ENCODE measurements at regions of chr7 and their contacts with region 1.

Region 1: DNA sequence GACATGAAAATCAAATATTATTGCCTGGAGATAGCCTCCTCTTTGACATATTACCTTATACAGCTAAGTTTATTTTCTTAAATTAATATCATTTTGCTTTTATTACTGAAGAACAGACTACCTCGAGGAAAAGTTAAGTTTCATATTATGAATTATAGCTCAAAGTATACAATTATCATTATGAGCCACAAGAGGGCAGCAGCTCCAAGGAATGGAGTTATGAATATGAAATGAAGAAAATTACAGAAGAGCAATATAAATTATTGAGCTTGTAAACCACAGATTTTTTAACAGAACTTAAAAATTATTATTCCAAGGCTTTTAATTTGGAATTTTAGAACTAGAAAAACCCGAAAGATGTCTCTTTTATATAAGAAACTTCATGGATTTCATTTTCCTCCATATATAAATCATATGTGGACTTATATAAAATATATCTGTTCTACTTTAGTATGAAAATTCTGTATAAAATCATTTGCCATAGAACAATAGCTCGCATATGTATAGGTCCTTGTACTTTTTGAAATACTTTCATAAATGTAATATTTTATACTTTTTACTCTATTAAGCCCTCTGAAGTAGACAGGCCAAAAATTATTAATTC is 40.1 kb downstream of the IQUB start:
- DNase-seq: peak; percentile 67
- H3K4me3 Mint-ChIP-seq: no peak overlapping the region
- H3K27ac Mint-ChIP-seq: no peak overlapping the region
- H3K4me1 Mint-ChIP-seq: no peaks in the 10 kb centered on the region
- H3K27me3 Mint-ChIP-seq: no peaks in the 10 kb centered on the region
- CTCF ChIP-seq: peak; percentile 60

Region 2: GRCh38 chr7:123468303-123468702 is 26.0 kb before region 1 on chr7:
- CTCF ChIA-PET with region 1: interaction called, 16 read pairs
- POLR2A ChIA-PET with region 1: interaction called, 3 read pairs
- intact Hi-C with region 1: no loop called
- DNase-seq: no peak
- H3K4me3 Mint-ChIP-seq: no peak overlapping the region
- H3K27ac Mint-ChIP-seq: no peak overlapping the region
- H3K4me1 Mint-ChIP-seq: no peaks in the 10 kb centered on the region
- H3K27me3 Mint-ChIP-seq: no peaks in the 10 kb centered on the region
- CTCF ChIP-seq: no peak

Region 3: GRCh38 chr7:123505221-123505620 is 10.9 kb after region 1 on chr7:
- CTCF ChIA-PET with region 1: interaction called, 19 read pairs
- POLR2A ChIA-PET with region 1: interaction called, 3 read pairs
- intact Hi-C with region 1: no loop called
- DNase-seq: no peak
- H3K4me3 Mint-ChIP-seq: no peak overlapping the region
- H3K27ac Mint-ChIP-seq: no peak overlapping the region
- H3K4me1 Mint-ChIP-seq: no peaks in the 10 kb centered on the region
- H3K27me3 Mint-ChIP-seq: no peaks in the 10 kb centered on the region
- CTCF ChIP-seq: no peak

Region 4: GRCh38 chr7:123534383-123535260 is 40.3 kb after region 1 on chr7 and contains the start of gene IQUB:
- CTCF ChIA-PET with region 1: interaction called, 41 read pairs
- POLR2A ChIA-PET with region 1: interaction called, 7 read pairs
- intact Hi-C with region 1: loop called (anchors 1 kb)
- DNase-seq: peak; percentile 98
- H3K4me3 Mint-ChIP-seq: peak within 1 kb of the TSS; percentile 75
- H3K27ac Mint-ChIP-seq: peak within 1 kb of the TSS; percentile 43
- H3K4me1 Mint-ChIP-seq: peaks cover 22% of the 10 kb centered on the region
- H3K27me3 Mint-ChIP-seq: peaks cover 22% of the 10 kb centered on the region
- CTCF ChIP-seq: no peak
- total RNA-seq, gene IQUB: 0.16 and 0.17 TPM in 2 replicates

Region 5: DNA sequence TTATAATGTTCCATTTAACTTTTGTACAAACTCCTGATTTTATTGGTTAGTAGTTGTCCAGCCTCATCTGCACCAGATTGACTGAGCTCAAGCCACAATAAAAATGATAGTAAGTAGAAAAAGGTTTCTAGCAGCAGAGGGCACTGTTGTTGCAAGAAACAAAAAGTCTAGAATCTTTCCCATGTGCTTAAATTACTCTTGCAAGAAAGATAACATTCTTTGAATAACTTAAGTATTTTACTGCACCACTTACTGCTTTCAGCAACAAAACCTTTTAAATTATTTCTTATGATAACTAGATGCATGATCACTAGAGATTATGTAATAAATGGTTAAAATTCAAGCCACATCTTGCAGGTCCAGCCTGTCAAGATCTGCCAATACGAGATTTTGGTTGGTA is 188.4 kb after region 1 on chr7:
- CTCF ChIA-PET with region 1: no interaction called
- POLR2A ChIA-PET with region 1: no interaction called
- intact Hi-C with region 1: loop called (anchors 10 kb)
- DNase-seq: peak; percentile 58
- H3K4me3 Mint-ChIP-seq: no peak overlapping the region
- H3K27ac Mint-ChIP-seq: no peak overlapping the region
- H3K4me1 Mint-ChIP-seq: no peaks in the 10 kb centered on the region
- H3K27me3 Mint-ChIP-seq: no peaks in the 10 kb centered on the region
- CTCF ChIP-seq: peak; percentile 46

Region 6: DNA sequence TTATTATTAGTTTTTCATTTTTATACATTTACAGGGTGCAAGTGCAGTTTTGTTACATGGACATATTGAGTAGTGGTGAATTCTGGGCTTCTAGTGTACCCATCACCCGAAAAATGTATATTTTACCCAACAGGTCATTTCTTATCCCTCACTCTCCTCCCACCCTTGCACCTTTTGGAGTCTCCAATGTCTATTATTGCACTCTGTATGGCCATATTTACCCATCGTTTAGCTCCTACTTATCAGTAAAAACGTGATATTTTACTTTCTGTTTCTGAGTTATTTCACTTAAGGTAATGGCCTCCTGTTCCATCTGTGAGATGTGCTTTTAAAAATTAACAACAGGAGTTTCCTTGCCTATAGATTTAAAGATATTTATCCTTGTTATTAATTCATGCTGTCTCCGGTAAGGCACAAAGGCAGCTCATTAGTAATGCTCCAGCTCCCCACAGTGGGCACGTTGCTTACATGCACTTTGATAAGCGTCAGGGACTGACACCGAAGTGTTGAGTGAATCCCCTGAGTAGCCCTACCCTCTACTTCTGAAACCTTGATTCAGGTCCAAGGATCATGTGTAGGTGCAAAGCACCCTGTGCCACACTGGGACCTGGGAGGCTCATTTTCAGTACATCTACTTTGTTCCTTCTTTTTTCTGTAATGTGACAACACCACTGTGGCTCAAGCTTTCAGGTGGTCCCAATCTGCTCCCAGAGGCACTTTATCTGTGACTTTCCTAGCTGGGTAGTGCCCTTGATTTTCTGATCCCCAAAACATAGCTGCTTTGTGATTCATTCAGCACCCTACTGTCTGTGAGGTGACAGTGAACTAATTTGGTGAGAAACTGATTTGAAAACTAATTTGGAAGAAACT is 377.9 kb after region 1 on chr7:
- CTCF ChIA-PET with region 1: interaction called, 5 read pairs
- POLR2A ChIA-PET with region 1: no interaction called
- intact Hi-C with region 1: loop called (anchors 1 kb)
- DNase-seq: peak; percentile 72
- H3K4me3 Mint-ChIP-seq: no peak overlapping the region
- H3K27ac Mint-ChIP-seq: no peak overlapping the region
- H3K4me1 Mint-ChIP-seq: no peaks in the 10 kb centered on the region
- H3K27me3 Mint-ChIP-seq: no peaks in the 10 kb centered on the region
- CTCF ChIP-seq: peak; percentile 48